B cell (primary cell): ENCODE measurements at regions of chr5 and their contacts with region 1.

Region 1: GRCh38 chr5:181159286-181159829 is 12.0 kb downstream of the OR2V2 start:
- DNase-seq: peak; percentile 89
- ATAC-seq: peak; percentile 76
- H3K4me3 ChIP-seq: no peak overlapping the region
- H3K4me3 Mint-ChIP-seq: peak overlapping the region; percentile 70
- H3K27ac ChIP-seq: no peak overlapping the region
- H3K27ac Mint-ChIP-seq: peak overlapping the region; percentile 80
- H3K4me1 ChIP-seq: peaks cover 17 to 28% of the 10 kb centered on the region in 2 donors
- H3K4me1 Mint-ChIP-seq: peaks cover 25% of the 10 kb centered on the region
- H3K27me3 ChIP-seq: peaks cover 0 to 33% (median 2%) of the 10 kb centered on the region in 4 experiments
- H3K27me3 Mint-ChIP-seq: peaks cover 9% of the 10 kb centered on the region
- CTCF ChIP-seq: peak; percentile 96

Region 2: GRCh38 chr5:180802325-180803180 is 356.8 kb before region 1 on chr5 and contains the start of gene MGAT1:
- CTCF ChIA-PET with region 1: no interaction called
- POLR2A ChIA-PET with region 1: no interaction called
- intact Hi-C with region 1: loop called (anchors 5 kb)
- DNase-seq: peak; percentile 82
- ATAC-seq: peak; percentile 65
- H3K4me3 ChIP-seq: peak within 1 kb of the TSS; percentile 82 to 96 (median 90)
- H3K4me3 Mint-ChIP-seq: peak within 1 kb of the TSS; percentile 96
- H3K27ac ChIP-seq: peak within 1 kb of the TSS; percentile 81 to 90
- H3K27ac Mint-ChIP-seq: peak within 1 kb of the TSS; percentile 87
- H3K4me1 ChIP-seq: peaks cover 80 to 83% of the 10 kb centered on the region in 2 donors
- H3K4me1 Mint-ChIP-seq: peaks cover 84% of the 10 kb centered on the region
- H3K27me3 ChIP-seq: no peaks in the 10 kb centered on the region
- H3K27me3 Mint-ChIP-seq: no peaks in the 10 kb centered on the region
- CTCF ChIP-seq: no peak
- total RNA-seq, gene MGAT1: 140 and 144 TPM in 2 replicates

Region 3: GRCh38 chr5:181050016-181050415 is 109.3 kb before region 1 on chr5:
- CTCF ChIA-PET with region 1: no interaction called
- POLR2A ChIA-PET with region 1: no interaction called
- intact Hi-C with region 1: no loop called
- DNase-seq: no peak
- ATAC-seq: no peak
- H3K4me3 ChIP-seq: no peak overlapping the region
- H3K4me3 Mint-ChIP-seq: no peak overlapping the region
- H3K27ac ChIP-seq: no peak overlapping the region
- H3K27ac Mint-ChIP-seq: peak overlapping the region; percentile 56
- H3K4me1 ChIP-seq: peaks cover 28 to 48% of the 10 kb centered on the region in 2 donors
- H3K4me1 Mint-ChIP-seq: peaks cover 49% of the 10 kb centered on the region
- H3K27me3 ChIP-seq: peaks cover 0 to 71% (median 42%) of the 10 kb centered on the region in 4 experiments
- H3K27me3 Mint-ChIP-seq: peaks cover 48% of the 10 kb centered on the region
- CTCF ChIP-seq: no peak

Region 4: DNA sequence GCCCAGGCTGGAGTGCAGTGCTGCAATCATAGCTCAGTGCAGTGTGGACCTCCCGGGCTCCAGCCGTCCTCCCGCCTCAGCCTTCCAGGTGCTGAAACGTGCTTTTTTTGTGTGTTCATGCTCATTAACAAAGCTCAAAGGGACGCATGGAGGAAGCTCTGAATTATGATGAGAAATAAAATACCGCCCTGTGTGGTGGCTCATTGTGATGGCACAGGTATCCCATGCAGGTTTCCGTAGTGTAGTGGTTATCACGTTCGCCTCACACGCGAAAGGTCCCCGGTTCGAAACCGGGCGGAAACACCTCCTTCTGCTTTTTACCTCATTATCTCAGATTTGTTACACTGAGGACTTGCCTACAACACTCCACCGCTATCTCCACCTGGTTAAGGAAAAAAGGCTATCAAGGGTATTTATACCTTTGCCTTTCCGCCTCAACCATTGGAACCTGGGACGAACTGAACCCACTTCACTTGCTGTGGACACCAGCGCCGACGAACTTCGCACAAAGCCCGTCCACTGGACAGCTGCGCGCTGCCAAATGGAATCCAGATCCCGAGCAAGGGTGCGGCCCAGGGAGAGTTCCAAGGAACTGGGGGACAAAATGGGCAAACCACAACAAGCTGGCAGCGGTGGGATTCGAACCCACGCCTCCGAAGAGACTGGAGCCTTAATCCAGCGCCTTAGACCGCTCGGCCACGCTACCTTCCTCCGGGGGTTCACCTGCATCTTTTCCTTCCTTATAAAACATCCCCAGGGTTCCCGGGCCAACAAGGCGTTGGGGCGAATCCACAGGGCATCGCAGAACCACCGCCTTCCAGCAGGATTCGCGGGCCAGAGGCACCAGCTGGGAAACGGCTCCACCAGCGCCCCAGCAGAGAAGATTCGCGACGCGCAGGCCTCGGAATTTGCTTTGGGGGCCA is 14.3 kb after region 1 on chr5:
- CTCF ChIA-PET with region 1: interaction called, 9 read pairs
- POLR2A ChIA-PET with region 1: no interaction called
- intact Hi-C with region 1: loop called (anchors 1 kb)
- DNase-seq: peak; percentile 79
- ATAC-seq: peak; percentile 69
- H3K4me3 ChIP-seq: peak overlapping the region in 4 of 5 experiments; percentile 18 to 52 (median 34)
- H3K4me3 Mint-ChIP-seq: peak overlapping the region; percentile 85
- H3K27ac ChIP-seq: no peak overlapping the region
- H3K27ac Mint-ChIP-seq: peak overlapping the region; percentile 86
- H3K4me1 ChIP-seq: peaks cover 27 to 29% of the 10 kb centered on the region in 2 donors
- H3K4me1 Mint-ChIP-seq: peaks cover 29% of the 10 kb centered on the region
- H3K27me3 ChIP-seq: peaks cover 0 to 54% (median 16%) of the 10 kb centered on the region in 4 experiments
- H3K27me3 Mint-ChIP-seq: peaks cover 28% of the 10 kb centered on the region
- CTCF ChIP-seq: peak; percentile 2

Region 5: DNA sequence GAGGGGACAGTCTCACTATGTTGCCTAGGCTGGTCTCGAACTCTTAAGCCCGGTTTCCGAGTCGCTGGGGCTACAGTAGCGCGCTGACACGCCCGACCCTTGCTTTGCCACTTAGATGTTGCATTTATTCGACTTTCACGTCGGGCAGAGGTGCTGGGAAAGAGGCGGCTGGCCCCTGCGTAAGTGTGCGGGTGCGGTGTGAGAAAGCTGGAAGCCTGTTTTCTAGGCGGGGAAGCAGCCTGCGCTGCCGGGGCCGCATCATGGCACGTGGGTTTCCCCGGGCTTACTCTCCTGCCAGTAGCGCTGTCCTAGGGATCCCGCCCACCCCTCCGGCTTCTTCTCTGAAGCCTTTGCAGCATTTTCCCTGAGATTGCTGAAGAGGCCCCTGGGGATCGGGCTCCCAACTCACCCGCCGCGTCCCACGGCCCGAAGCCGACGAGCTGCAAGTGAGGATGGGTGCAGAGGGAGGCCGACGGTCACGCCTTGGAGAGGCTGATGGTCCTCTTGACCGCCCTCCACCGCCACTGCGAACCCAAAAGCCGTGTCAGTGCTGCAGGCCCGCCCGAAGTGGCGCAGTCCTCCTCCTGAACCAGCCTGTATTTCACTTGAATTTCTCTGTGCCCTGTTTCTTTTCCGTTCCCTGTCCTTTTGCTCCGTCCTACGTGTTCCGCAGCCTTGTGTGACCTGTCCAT is 57.9 kb after region 1 on chr5:
- CTCF ChIA-PET with region 1: no interaction called
- POLR2A ChIA-PET with region 1: no interaction called
- intact Hi-C with region 1: loop called (anchors 10 kb)
- DNase-seq: peak; percentile 83
- ATAC-seq: peak; percentile 32
- H3K4me3 ChIP-seq: peak overlapping the region; percentile 53 to 86 (median 71)
- H3K4me3 Mint-ChIP-seq: peak overlapping the region; percentile 99
- H3K27ac ChIP-seq: peak overlapping the region; percentile 31 to 57
- H3K27ac Mint-ChIP-seq: peak overlapping the region; percentile 94
- H3K4me1 ChIP-seq: peaks cover 9 to 32% of the 10 kb centered on the region in 2 donors
- H3K4me1 Mint-ChIP-seq: peaks cover 40% of the 10 kb centered on the region
- H3K27me3 ChIP-seq: no peaks in the 10 kb centered on the region
- H3K27me3 Mint-ChIP-seq: no peaks in the 10 kb centered on the region
- CTCF ChIP-seq: no peak